Common myeloid progenitor, CD34-positive (primary cell): ENCODE measurements at regions of chr18 and their contacts with region 1.

Region 1: DNA sequence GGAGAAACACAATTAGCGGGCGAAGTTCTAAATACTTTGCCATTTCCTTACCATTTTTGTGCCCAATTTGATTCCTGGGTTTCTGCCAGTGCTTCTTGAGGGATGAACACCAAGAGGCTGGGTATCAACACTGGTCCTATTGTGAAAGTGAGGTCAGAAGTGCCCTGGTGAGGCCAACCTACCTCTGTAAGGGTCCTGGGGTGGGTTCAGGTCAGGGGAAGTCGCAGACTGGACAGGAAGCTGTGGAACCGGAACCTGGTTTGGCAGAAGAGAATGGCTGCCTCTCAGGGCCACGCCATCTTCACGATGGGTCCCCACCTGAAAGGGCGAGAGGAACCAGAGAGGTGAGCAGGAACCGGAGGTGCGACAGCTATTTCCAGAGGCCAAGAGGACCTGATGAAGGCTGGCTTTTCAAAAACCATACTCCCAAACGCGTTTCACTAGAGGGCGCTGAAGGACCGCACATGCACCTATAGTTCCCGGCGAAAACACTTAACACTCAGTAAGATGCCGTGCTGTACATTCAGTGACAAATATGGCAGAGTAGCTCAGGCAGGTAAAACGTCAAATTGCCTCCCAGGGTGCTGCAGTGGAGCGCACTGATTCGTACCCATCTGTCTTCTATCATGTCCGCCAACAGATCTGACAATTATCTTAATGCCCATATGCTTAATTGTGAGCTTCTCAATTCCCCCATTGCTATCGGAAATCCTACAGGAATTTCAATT is 275.3 kb upstream of the CCDC68 start:
- DNase-seq: peak; percentile 84 to 92 (median 89)
- H3K4me3 ChIP-seq: no peak overlapping the region
- H3K27ac ChIP-seq: no peak overlapping the region
- H3K4me1 ChIP-seq: peaks cover 0 to 13% (median 3%) of the 10 kb centered on the region in 4 experiments
- H3K27me3 ChIP-seq: no peaks in the 10 kb centered on the region

Region 2: DNA sequence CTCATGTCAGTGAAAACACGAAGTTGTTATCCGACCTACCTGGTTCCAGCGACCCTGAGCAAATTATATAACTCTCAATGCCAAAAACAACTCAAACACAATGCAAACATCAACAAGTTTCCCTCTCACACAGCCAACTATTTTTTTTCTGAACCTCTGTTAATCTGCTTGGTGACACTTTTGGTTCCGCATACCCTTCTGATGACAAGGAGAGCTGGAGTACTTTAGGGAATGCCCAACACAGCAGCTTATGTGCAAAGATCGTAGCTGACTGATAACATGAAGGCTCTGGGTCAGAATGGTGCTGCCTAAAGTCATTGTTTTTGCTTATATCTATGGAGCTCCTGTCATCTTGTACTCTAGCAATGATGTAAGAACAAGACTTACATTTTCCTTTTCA is 202.6 kb before region 1 on chr18:
- CTCF ChIA-PET with region 1: no interaction called
- POLR2A ChIA-PET with region 1: no interaction called
- DNase-seq: no peak
- H3K4me3 ChIP-seq: no peak overlapping the region
- H3K27ac ChIP-seq: no peak overlapping the region
- H3K4me1 ChIP-seq: no peaks in the 10 kb centered on the region
- H3K27me3 ChIP-seq: peaks cover 0 to 2% (median 0%) of the 10 kb centered on the region in 5 experiments

Region 3: GRCh38 chr18:55087998-55088401 is 146.5 kb before region 1 on chr18:
- CTCF ChIA-PET with region 1: no interaction called
- POLR2A ChIA-PET with region 1: no interaction called
- DNase-seq: no peak
- H3K4me3 ChIP-seq: no peak overlapping the region
- H3K27ac ChIP-seq: no peak overlapping the region
- H3K4me1 ChIP-seq: no peaks in the 10 kb centered on the region
- H3K27me3 ChIP-seq: peaks cover 0 to 9% (median 3%) of the 10 kb centered on the region in 5 experiments

Region 4: GRCh38 chr18:55166260-55166598 is 68.3 kb before region 1 on chr18:
- CTCF ChIA-PET with region 1: no interaction called
- POLR2A ChIA-PET with region 1: no interaction called
- DNase-seq: no peak
- H3K4me3 ChIP-seq: no peak overlapping the region
- H3K27ac ChIP-seq: no peak overlapping the region
- H3K4me1 ChIP-seq: no peaks in the 10 kb centered on the region
- H3K27me3 ChIP-seq: peaks cover 0 to 2% (median 0%) of the 10 kb centered on the region in 5 experiments

Region 5: GRCh38 chr18:55220523-55220922 is 14.0 kb before region 1 on chr18:
- CTCF ChIA-PET with region 1: interaction called, 10 read pairs
- POLR2A ChIA-PET with region 1: no interaction called
- DNase-seq: peak in 2 of 3 donors; percentile 48 to 55
- H3K4me3 ChIP-seq: no peak overlapping the region
- H3K27ac ChIP-seq: no peak overlapping the region
- H3K4me1 ChIP-seq: peaks cover 0 to 7% (median 3%) of the 10 kb centered on the region in 4 experiments
- H3K27me3 ChIP-seq: no peaks in the 10 kb centered on the region

Region 6: GRCh38 chr18:55265984-55266383 is 31.5 kb after region 1 on chr18:
- CTCF ChIA-PET with region 1: interaction called, 10 read pairs
- POLR2A ChIA-PET with region 1: no interaction called
- DNase-seq: no peak
- H3K4me3 ChIP-seq: no peak overlapping the region
- H3K27ac ChIP-seq: no peak overlapping the region
- H3K4me1 ChIP-seq: peaks cover 8 to 40% (median 28%) of the 10 kb centered on the region in 4 experiments
- H3K27me3 ChIP-seq: no peaks in the 10 kb centered on the region

Region 7: DNA sequence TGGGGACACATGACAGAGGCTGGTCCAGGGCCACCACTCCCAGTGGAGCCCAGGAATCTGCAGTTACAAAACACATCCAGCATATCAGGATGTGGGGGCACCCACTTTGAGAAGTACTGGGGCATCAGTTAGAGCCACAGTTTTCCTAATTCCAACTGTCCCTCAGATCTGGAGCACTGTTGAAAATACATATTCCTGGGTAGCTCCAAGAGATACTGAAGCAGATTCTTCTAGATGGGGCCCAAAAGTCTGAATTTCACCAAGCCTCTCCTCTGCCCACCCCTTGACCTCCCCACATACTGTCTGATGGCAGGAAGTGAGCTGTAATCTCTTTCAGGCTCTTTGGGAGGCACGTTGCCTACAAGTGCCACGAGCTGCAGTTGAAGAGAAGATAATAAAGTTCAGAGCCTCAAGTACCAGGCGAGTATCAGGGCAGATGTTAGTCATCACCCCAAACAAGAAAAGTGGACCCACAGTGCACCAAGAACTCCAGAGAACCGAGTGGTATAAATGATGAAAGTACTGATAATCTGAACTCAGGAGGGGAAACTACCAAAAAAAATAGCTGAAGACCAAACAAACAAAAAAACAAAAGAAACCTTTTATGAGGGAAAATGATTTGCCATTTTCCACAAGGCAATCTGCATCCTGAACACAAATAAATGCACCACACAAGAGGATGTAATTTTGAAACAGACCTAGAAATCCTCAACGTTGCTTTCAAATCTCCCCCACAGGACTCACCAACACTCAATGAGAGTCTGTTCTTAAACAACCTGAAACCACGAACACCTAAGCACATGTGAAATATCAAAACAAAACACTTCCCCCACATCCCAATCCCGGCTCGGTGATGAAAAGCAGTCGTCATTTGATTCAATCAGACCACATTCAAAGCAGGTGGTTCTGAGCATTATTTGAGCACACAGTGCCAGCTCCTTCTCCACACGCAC is 254.8 kb after region 1 on chr18:
- CTCF ChIA-PET with region 1: no interaction called
- POLR2A ChIA-PET with region 1: no interaction called
- DNase-seq: peak in 2 of 3 donors; percentile 66 to 67
- H3K4me3 ChIP-seq: peak overlapping the region in 2 of 7 experiments; percentile 6 to 13
- H3K27ac ChIP-seq: no peak overlapping the region
- H3K4me1 ChIP-seq: peaks cover 6 to 16% (median 10%) of the 10 kb centered on the region in 4 experiments
- H3K27me3 ChIP-seq: no peaks in the 10 kb centered on the region

Region 8: GRCh38 chr18:56575819-56576663 is 1341.5 kb after region 1 on chr18:
- CTCF ChIA-PET with region 1: interaction called, 51 read pairs
- POLR2A ChIA-PET with region 1: no interaction called
- DNase-seq: peak; percentile 56 to 73 (median 64)
- H3K4me3 ChIP-seq: no peak overlapping the region
- H3K27ac ChIP-seq: no peak overlapping the region
- H3K4me1 ChIP-seq: peaks cover 0 to 5% (median 0%) of the 10 kb centered on the region in 4 experiments
- H3K27me3 ChIP-seq: no peaks in the 10 kb centered on the region